MCF 10A (cell line): ENCODE measurements at regions of chr2 and their contacts with region 1.

Region 1: DNA sequence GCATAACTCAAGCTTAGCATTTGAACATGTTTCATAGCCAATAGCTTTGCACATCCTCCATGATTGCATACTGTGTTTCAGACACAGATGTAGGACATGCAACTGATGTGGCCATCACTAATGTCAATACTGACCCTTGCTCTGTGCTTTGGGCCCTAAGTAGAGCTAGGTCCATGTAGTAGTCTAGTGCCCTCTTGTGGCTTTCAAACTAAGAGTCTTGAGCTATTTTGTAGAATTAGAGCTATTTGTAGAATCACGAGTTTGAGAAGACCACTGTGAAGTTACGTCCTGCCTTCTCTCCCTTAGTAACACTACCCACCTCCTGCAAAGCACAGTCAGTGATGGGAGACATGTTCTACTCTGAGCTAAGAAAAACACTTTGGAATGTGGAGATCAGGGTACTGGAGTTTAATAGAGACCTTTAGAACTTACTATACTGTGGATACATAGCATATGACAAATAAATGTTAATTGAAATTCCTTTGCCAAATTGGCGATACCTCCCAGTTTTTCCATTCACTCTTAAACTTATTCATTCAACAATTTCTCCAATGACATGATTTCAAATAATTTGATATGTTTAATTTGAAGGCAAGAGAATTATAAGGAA is 306.5 kb upstream of the TNP1 start:
- DNase-seq: peak; percentile 54
- H3K4me3 Mint-ChIP-seq: no peak overlapping the region
- H3K27ac Mint-ChIP-seq: no peak overlapping the region
- H3K4me1 Mint-ChIP-seq: peaks cover 6% of the 10 kb centered on the region
- H3K27me3 Mint-ChIP-seq: no peaks in the 10 kb centered on the region
- CTCF ChIP-seq: peak; percentile 65

Region 2: DNA sequence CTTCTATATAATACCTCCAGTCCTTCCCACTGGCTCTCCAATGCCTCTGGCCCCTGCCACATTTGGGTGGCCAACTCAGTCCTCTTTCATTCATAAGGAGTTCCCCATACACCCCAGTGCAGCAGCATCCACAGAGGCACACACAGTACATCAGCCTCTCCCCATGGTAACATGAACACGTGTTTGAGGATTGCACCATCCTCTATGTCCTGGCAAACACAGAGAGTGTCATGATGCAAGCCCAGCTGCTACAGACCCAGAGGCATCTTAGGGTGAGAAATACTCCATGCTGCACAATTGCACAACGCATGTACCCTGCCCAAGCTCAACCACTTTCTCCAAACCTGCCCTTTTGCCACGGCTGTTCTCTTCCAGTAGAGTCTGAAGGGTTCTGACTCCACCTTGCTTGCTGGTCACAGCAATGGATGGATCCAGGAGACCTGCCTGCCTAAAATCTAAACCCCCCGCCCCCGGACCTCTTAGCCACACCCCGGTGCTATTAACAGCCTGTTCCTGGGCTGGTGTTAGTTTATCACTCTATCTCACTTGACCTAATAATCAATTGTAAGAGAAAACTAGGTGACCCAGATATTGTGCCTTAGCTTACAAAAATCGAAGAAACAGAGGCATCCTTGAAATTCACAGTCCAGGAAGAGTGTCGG is 482.4 kb before region 1 on chr2:
- CTCF ChIA-PET with region 1: interaction called, 13 read pairs
- POLR2A ChIA-PET with region 1: no interaction called
- intact Hi-C with region 1: loop called (anchors 1 kb)
- DNase-seq: peak; percentile 99
- H3K4me3 Mint-ChIP-seq: no peak overlapping the region
- H3K27ac Mint-ChIP-seq: peak overlapping the region; percentile 93
- H3K4me1 Mint-ChIP-seq: peaks cover 32% of the 10 kb centered on the region
- H3K27me3 Mint-ChIP-seq: no peaks in the 10 kb centered on the region
- CTCF ChIP-seq: no peak

Region 3: DNA sequence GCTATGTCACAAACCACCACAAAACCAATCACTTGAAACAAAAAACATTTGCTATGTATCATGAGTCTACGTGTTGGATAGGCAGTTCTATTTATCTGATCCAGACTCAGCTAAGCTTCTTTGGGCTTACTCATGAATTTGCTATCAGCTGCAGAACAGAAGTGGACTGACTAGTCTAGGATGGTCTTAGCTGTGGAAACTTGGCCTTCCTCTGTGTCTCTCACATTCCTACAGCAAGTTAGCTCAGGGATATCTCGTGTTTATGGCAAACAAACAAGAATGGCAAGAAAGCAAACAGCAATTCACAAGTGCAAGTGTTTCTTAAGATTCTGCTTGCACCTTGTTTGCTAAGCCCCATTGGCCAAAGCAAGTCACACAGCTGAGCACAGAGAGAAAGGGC is 18.5 kb before region 1 on chr2:
- CTCF ChIA-PET with region 1: interaction called, 11 read pairs
- POLR2A ChIA-PET with region 1: no interaction called
- intact Hi-C with region 1: no loop called
- DNase-seq: no peak
- H3K4me3 Mint-ChIP-seq: no peak overlapping the region
- H3K27ac Mint-ChIP-seq: no peak overlapping the region
- H3K4me1 Mint-ChIP-seq: no peaks in the 10 kb centered on the region
- H3K27me3 Mint-ChIP-seq: peaks cover 24% of the 10 kb centered on the region
- CTCF ChIP-seq: no peak

Region 4: DNA sequence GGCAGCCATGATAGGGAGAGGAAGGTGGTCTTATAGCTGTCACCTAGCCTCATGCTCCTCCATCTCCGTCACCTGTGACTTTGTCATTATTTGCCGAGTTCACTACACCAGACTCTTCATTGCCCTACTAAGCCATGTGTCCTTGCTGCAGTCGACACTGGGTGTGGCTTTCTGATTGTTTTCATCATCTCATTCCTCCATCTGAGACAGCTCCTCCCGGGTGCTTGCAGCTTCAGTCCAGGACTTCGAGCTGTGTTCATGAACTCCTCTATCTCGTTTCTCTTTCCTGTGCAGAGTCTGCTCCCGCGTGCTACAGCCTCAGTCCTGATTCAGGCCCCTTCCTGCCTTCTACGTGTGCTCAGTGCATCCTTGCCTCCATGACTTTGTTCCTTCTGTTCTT is 11.4 kb before region 1 on chr2:
- CTCF ChIA-PET with region 1: interaction called, 19 read pairs
- POLR2A ChIA-PET with region 1: no interaction called
- intact Hi-C with region 1: no loop called
- DNase-seq: no peak
- H3K4me3 Mint-ChIP-seq: no peak overlapping the region
- H3K27ac Mint-ChIP-seq: no peak overlapping the region
- H3K4me1 Mint-ChIP-seq: no peaks in the 10 kb centered on the region
- H3K27me3 Mint-ChIP-seq: peaks cover 18% of the 10 kb centered on the region
- CTCF ChIP-seq: no peak

Region 5: GRCh38 chr2:217294824-217295223 is 128.5 kb after region 1 on chr2:
- CTCF ChIA-PET with region 1: no interaction called
- POLR2A ChIA-PET with region 1: no interaction called
- intact Hi-C with region 1: no loop called
- DNase-seq: no peak
- H3K4me3 Mint-ChIP-seq: no peak overlapping the region
- H3K27ac Mint-ChIP-seq: no peak overlapping the region
- H3K4me1 Mint-ChIP-seq: no peaks in the 10 kb centered on the region
- H3K27me3 Mint-ChIP-seq: no peaks in the 10 kb centered on the region
- CTCF ChIP-seq: no peak